ENCODE measurements at regions of chr6 and their contacts with region 1.

Region 1: GRCh38 chr6:159633196-159633595 is 59.8 kb downstream of the SOD2 start:
- DNase-seq: peak; percentile 32
- ATAC-seq: peak; percentile 63; the same call in 1 of the 2 replicates
- H3K4me3 Mint-ChIP-seq: no peak overlapping the region
- H3K27ac Mint-ChIP-seq: no peak overlapping the region
- H3K4me1 Mint-ChIP-seq: peaks cover 10% of the 10 kb centered on the region
- H3K27me3 Mint-ChIP-seq: no peaks in the 10 kb centered on the region
- CTCF ChIP-seq: peak; percentile 41; the same call in 1 of the 2 replicates

Region 2: GRCh38 chr6:159169193-159169555 is 464.0 kb before region 1 on chr6 and contains the start of gene FNDC1:
- CTCF ChIA-PET with region 1: interaction called, 11 read pairs
- POLR2A ChIA-PET with region 1: no interaction called
- DNase-seq: peak; percentile 63
- ATAC-seq: peak; percentile 47
- H3K4me3 Mint-ChIP-seq: peak within 1 kb of the TSS; percentile 77
- H3K27ac Mint-ChIP-seq: no peak within 1 kb of the TSS
- H3K4me1 Mint-ChIP-seq: peaks cover 15% of the 10 kb centered on the region
- H3K27me3 Mint-ChIP-seq: peaks cover 90% of the 10 kb centered on the region
- CTCF ChIP-seq: peak; percentile 27; the same call in 1 of the 2 replicates
- total RNA-seq, gene FNDC1: 0.23 to 0.44 TPM (median 0.34 TPM) in 3 replicates

Region 3: DNA sequence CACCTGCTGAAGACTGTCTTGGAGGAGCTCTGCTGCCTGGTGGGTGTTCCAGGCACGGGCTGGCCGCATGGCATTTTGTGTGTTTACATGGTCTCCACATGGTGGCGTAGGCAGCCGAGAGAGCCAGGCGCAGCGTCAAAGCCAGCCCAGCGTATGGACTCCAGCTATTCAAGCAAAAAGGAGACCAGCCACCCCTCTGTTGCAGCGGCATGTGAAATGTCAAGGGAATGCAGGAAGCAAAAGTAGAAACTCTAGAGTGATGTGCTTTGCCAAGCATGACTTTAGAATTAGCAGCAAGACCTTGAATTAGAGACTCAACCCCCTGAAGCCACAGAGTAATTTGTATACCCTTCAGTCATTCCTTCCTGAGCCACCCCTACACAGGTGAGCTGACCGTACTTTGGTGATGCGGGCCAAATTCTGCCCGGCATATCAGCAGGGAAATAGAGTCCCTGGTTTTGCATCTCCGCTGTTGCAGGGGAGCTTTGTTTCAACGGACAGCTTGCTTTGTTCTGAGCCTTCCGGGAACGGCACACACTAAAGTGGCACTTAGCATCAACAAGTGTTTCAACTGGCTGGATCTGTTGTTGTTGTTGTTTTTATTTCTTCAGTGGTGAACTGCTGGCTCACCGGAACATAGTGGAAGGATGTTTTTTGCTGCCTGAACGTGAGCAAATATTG is 415.5 kb before region 1 on chr6:
- CTCF ChIA-PET with region 1: interaction called, 10 read pairs
- POLR2A ChIA-PET with region 1: no interaction called
- DNase-seq: peak; percentile 80
- ATAC-seq: peak; percentile 94
- H3K4me3 Mint-ChIP-seq: no peak overlapping the region
- H3K27ac Mint-ChIP-seq: peak overlapping the region; percentile 21; the same call in 1 of the 2 replicates
- H3K4me1 Mint-ChIP-seq: peaks cover 23% of the 10 kb centered on the region
- H3K27me3 Mint-ChIP-seq: no peaks in the 10 kb centered on the region
- CTCF ChIP-seq: 0 out of 2 replicates have a peak, but pooled peaks have one; percentile 14

Region 4: DNA sequence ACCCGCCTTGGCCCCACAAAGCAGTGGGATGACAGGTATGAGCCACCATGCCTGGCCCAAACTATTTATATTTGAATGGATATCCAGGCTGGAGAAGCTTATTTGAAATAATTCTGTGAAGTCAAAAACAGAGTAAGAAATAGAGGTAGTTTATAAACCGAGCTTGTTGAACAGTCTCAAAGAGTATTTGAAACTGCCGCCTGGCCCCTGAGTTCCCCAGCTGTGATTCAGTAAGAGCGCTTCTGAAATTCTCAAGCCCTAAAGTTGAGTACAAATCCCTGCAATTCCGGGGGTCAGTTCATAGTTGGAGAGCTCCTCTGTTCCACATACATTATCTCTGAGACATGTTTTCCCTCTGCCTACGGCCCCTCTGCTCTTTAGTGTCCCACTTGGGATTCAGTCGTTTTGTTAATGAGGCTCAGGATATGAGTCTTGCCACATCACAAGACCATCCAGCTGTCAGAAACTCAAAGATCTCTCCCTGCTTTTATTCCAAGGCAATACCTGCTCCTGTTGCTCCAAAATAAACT is 68.0 kb before region 1 on chr6:
- CTCF ChIA-PET with region 1: interaction called, 11 read pairs
- POLR2A ChIA-PET with region 1: no interaction called
- DNase-seq: no peak
- ATAC-seq: no peak
- H3K4me3 Mint-ChIP-seq: no peak overlapping the region
- H3K27ac Mint-ChIP-seq: no peak overlapping the region
- H3K4me1 Mint-ChIP-seq: no peaks in the 10 kb centered on the region
- H3K27me3 Mint-ChIP-seq: peaks cover 4% of the 10 kb centered on the region
- CTCF ChIP-seq: no peak

Region 5: GRCh38 chr6:159620947-159621346 is 12.2 kb before region 1 on chr6:
- CTCF ChIA-PET with region 1: interaction called, 23 read pairs
- POLR2A ChIA-PET with region 1: interaction called, 3 read pairs
- DNase-seq: no peak
- ATAC-seq: no peak
- H3K4me3 Mint-ChIP-seq: no peak overlapping the region
- H3K27ac Mint-ChIP-seq: no peak overlapping the region
- H3K4me1 Mint-ChIP-seq: no peaks in the 10 kb centered on the region
- H3K27me3 Mint-ChIP-seq: no peaks in the 10 kb centered on the region; the same call in 1 of the 2 replicates
- CTCF ChIP-seq: no peak

Measured in WTC11 (cell line).